Naive thymus-derived CD4-positive, alpha-beta T cell (primary cell): ENCODE measurements at regions of chr12 and their contacts with region 1.

Region 1: GRCh38 chr12:6851921-6852650 is at the start of gene USP5:
- DNase-seq: peak; percentile 87 to 100 (median 99)
- ATAC-seq: peak; percentile 87
- H3K4me3 ChIP-seq: peak within 1 kb of the TSS; percentile 87
- H3K4me3 Mint-ChIP-seq: peak within 1 kb of the TSS; percentile 89 to 100 (median 94)
- H3K27ac ChIP-seq: peak within 1 kb of the TSS; percentile 85
- H3K27ac Mint-ChIP-seq: peak within 1 kb of the TSS; percentile 89 to 99 (median 97)
- H3K4me1 ChIP-seq: peaks cover 16 to 18% of the 10 kb centered on the region in 2 donors
- H3K4me1 Mint-ChIP-seq: peaks cover 12 to 38% (median 28%) of the 10 kb centered on the region in 7 donors
- H3K27me3 ChIP-seq: no peaks in the 10 kb centered on the region
- H3K27me3 Mint-ChIP-seq: no peaks in the 10 kb centered on the region
- total RNA-seq, gene USP5: 58.0 to 134 (median 71.1) TPM

Region 2: DNA sequence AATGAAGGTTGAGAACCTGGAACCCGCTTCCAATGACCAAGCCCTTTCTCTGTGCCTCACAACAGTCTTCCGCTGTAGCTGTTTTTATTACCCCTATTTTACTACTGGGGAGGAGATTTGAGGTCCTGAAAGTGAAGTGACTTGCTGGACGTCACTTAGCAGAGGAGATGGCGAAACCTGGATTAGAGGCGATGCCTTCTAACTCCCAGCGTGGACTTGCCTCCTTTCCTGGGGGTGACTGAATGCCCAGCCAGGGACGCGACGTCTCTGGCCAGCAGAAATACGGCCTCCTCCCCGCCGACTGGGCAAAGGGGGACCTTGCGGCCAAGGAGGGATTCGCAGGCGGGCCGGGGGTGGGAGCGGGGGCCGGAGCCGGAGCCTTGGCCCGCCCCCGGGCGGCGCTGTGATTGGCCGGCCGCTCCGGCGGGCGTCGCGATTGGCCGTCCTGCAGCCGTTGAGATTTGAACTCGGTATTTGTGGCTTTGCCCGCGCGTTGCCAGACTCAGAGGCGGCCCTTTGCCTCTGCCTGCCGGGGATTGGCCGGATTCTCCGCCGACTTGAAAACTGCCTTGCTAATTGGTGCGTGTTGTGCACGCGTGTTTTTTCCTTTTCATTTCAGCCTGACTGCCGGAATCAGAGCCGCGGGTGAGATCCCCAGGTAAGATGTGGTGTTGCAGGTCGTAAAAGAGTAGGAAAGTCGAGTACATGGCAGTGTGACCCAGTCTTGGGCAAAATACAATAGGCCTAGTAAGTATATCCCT is 358.4 kb before region 1 on chr12 and contains the start of gene NCAPD2:
- CTCF ChIA-PET with region 1: no interaction called
- POLR2A ChIA-PET with region 1: interaction called, 7 read pairs
- intact Hi-C with region 1: loop called (anchors 1 kb)
- DNase-seq: peak; percentile 82 to 97 (median 96)
- ATAC-seq: peak; percentile 91
- H3K4me3 ChIP-seq: peak within 1 kb of the TSS; percentile 98
- H3K4me3 Mint-ChIP-seq: peak within 1 kb of the TSS; percentile 86 to 98 (median 96)
- H3K27ac ChIP-seq: peak within 1 kb of the TSS; percentile 83
- H3K27ac Mint-ChIP-seq: peak within 1 kb of the TSS; percentile 87 to 97 (median 96)
- H3K4me1 ChIP-seq: peaks cover 22 to 24% of the 10 kb centered on the region in 2 donors
- H3K4me1 Mint-ChIP-seq: peaks cover 18 to 44% (median 37%) of the 10 kb centered on the region in 7 donors
- H3K27me3 ChIP-seq: no peaks in the 10 kb centered on the region
- H3K27me3 Mint-ChIP-seq: no peaks in the 10 kb centered on the region
- total RNA-seq, gene NCAPD2: 30.3 to 121 (median 38.4) TPM

Region 3: GRCh38 chr12:6662906-6663742 is 189.0 kb before region 1 on chr12 and contains the start of gene ING4:
- CTCF ChIA-PET with region 1: no interaction called
- POLR2A ChIA-PET with region 1: no interaction called
- intact Hi-C with region 1: loop called (anchors 1 kb)
- DNase-seq: peak; percentile 79 to 99 (median 98)
- ATAC-seq: peak; percentile 99
- H3K4me3 ChIP-seq: peak within 1 kb of the TSS; percentile 92
- H3K4me3 Mint-ChIP-seq: peak within 1 kb of the TSS; percentile 92 to 99 (median 96)
- H3K27ac ChIP-seq: peak within 1 kb of the TSS; percentile 80
- H3K27ac Mint-ChIP-seq: peak within 1 kb of the TSS; percentile 91 to 99 (median 96)
- H3K4me1 ChIP-seq: peaks cover 15 to 16% of the 10 kb centered on the region in 2 donors
- H3K4me1 Mint-ChIP-seq: peaks cover 18 to 47% (median 36%) of the 10 kb centered on the region in 7 donors
- H3K27me3 ChIP-seq: no peaks in the 10 kb centered on the region
- H3K27me3 Mint-ChIP-seq: peaks cover 0 to 2% (median 0%) of the 10 kb centered on the region in 5 donors
- total RNA-seq, gene ING4: 33.1 to 101 (median 39.6) TPM

Region 4: GRCh38 chr12:6792522-6793201 is 59.4 kb before region 1 on chr12:
- CTCF ChIA-PET with region 1: no interaction called
- POLR2A ChIA-PET with region 1: interaction called, 13 read pairs
- intact Hi-C with region 1: loop called in 1 of 2 experiments (anchors 1 kb)
- DNase-seq: peak in 7 of 9 donors; percentile 66 to 79 (median 76)
- ATAC-seq: peak; percentile 76
- H3K4me3 ChIP-seq: peak overlapping the region; percentile 87
- H3K4me3 Mint-ChIP-seq: peak overlapping the region; percentile 85 to 99 (median 96)
- H3K27ac ChIP-seq: peak overlapping the region; percentile 86
- H3K27ac Mint-ChIP-seq: peak overlapping the region; percentile 88 to 99 (median 97)
- H3K4me1 ChIP-seq: peaks cover 0 to 29% of the 10 kb centered on the region in 2 donors
- H3K4me1 Mint-ChIP-seq: peaks cover 52 to 84% (median 72%) of the 10 kb centered on the region in 7 donors
- H3K27me3 ChIP-seq: no peaks in the 10 kb centered on the region
- H3K27me3 Mint-ChIP-seq: no peaks in the 10 kb centered on the region

Region 5: GRCh38 chr12:6873094-6874014 is 21.3 kb after region 1 on chr12 and contains the start of gene SPSB2:
- CTCF ChIA-PET with region 1: interaction called, 40 read pairs
- POLR2A ChIA-PET with region 1: interaction called, 90 read pairs
- intact Hi-C with region 1: loop called (anchors 1 kb)
- DNase-seq: peak; percentile 96 to 100 (median 98)
- ATAC-seq: peak; percentile 97
- H3K4me3 ChIP-seq: peak within 1 kb of the TSS; percentile 98
- H3K4me3 Mint-ChIP-seq: peak within 1 kb of the TSS; percentile 87 to 95 (median 91)
- H3K27ac ChIP-seq: peak within 1 kb of the TSS; percentile 77
- H3K27ac Mint-ChIP-seq: peak within 1 kb of the TSS; percentile 79 to 94 (median 88)
- H3K4me1 ChIP-seq: peaks cover 32 to 34% of the 10 kb centered on the region in 2 donors
- H3K4me1 Mint-ChIP-seq: peaks cover 34 to 58% (median 47%) of the 10 kb centered on the region in 7 donors
- H3K27me3 ChIP-seq: no peaks in the 10 kb centered on the region
- H3K27me3 Mint-ChIP-seq: no peaks in the 10 kb centered on the region
- total RNA-seq, gene SPSB2: 5.1 to 20.2 (median 11.2) TPM

Region 6: GRCh38 chr12:6937481-6938297 is 85.6 kb after region 1 on chr12:
- CTCF ChIA-PET with region 1: no interaction called
- POLR2A ChIA-PET with region 1: interaction called, 26 read pairs
- intact Hi-C with region 1: loop called in 1 of 2 experiments (anchors 1 kb)
- DNase-seq: peak; percentile 81 to 96 (median 93)
- ATAC-seq: peak; percentile 97
- H3K4me3 ChIP-seq: peak overlapping the region; percentile 90
- H3K4me3 Mint-ChIP-seq: peak overlapping the region; percentile 75 to 88 (median 84)
- H3K27ac ChIP-seq: peak overlapping the region; percentile 92
- H3K27ac Mint-ChIP-seq: peak overlapping the region; percentile 91 to 99 (median 96)
- H3K4me1 ChIP-seq: peaks cover 5 to 29% of the 10 kb centered on the region in 2 donors
- H3K4me1 Mint-ChIP-seq: peaks cover 41 to 67% (median 51%) of the 10 kb centered on the region in 7 donors
- H3K27me3 ChIP-seq: no peaks in the 10 kb centered on the region
- H3K27me3 Mint-ChIP-seq: no peaks in the 10 kb centered on the region

Region 7: GRCh38 chr12:7108796-7109571 is 256.9 kb after region 1 on chr12 and contains the start of gene C1RL:
- CTCF ChIA-PET with region 1: no interaction called
- POLR2A ChIA-PET with region 1: no interaction called
- intact Hi-C with region 1: loop called in 1 of 2 experiments (anchors 5 kb)
- DNase-seq: peak; percentile 50 to 88 (median 65)
- ATAC-seq: peak; percentile 69
- H3K4me3 ChIP-seq: peak within 1 kb of the TSS; percentile 95
- H3K4me3 Mint-ChIP-seq: peak within 1 kb of the TSS; percentile 90 to 98 (median 94)
- H3K27ac ChIP-seq: peak within 1 kb of the TSS; percentile 79
- H3K27ac Mint-ChIP-seq: peak within 1 kb of the TSS; percentile 84 to 95 (median 93)
- H3K4me1 ChIP-seq: peaks cover 6% of the 10 kb centered on the region in 2 donors
- H3K4me1 Mint-ChIP-seq: peaks cover 29 to 64% (median 43%) of the 10 kb centered on the region in 7 donors
- H3K27me3 ChIP-seq: no peaks in the 10 kb centered on the region
- H3K27me3 Mint-ChIP-seq: no peaks in the 10 kb centered on the region
- total RNA-seq, gene C1RL: 18.5 to 38.6 (median 24.4) TPM